Activated CD8-positive, alpha-beta memory T cell treated with anti-CD3 and anti-CD28 coated beads, Interleukin-2, amount 10 ng/mL, durations not matched to agents 7 days and 5 days (primary cell): ENCODE measurements at regions of chr3 and their contacts with region 1.

Region 1: GRCh38 chr3:156509189-156510174 is 45.4 kb downstream of the SSR3 start:
- DNase-seq: no peak
- ATAC-seq: peak; percentile 76
- H3K4me3 Mint-ChIP-seq: no peak overlapping the region
- H3K27ac Mint-ChIP-seq: no peak overlapping the region
- H3K4me1 Mint-ChIP-seq: peaks cover 13% of the 10 kb centered on the region
- H3K27me3 Mint-ChIP-seq: peaks cover 6% of the 10 kb centered on the region

Region 2: DNA sequence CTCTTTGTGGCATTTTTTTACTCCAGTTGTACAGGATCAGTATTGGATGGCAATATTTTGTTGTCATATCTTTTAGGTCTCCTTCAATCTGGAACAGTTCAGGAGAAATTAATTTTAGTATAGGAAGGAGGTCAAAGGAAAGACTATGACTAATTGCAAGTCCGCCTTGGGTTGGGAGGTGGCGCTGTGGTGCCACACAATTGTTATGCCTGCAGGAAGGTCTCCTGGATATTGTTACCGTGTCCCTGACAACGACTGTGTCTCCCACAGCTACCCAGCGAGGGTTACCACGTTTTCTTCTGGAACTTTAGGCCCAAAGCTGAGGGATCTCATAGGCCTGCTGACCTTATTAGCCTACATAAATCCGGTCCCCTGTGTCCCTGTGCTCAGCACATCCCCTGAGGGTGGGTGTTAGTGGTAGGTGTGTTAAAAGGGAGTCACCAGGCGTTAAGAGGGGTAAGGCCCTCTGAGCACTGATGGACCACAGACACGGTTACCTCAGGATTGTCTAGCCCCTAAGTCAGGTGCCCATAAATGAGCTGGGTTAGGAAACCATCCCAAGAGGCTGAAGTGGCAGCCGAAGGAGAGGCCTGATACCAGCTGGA is 357.6 kb before region 1 on chr3:
- CTCF ChIA-PET with region 1: interaction called, 75 read pairs
- DNase-seq: peak; percentile 68
- ATAC-seq: peak; percentile 65
- H3K4me3 Mint-ChIP-seq: no peak overlapping the region
- H3K27ac Mint-ChIP-seq: no peak overlapping the region
- H3K4me1 Mint-ChIP-seq: peaks cover 11% of the 10 kb centered on the region
- H3K27me3 Mint-ChIP-seq: peaks cover 7% of the 10 kb centered on the region

Region 3: GRCh38 chr3:156449712-156450574 is 59.5 kb before region 1 on chr3:
- CTCF ChIA-PET with region 1: interaction called, 35 read pairs
- DNase-seq: no peak
- ATAC-seq: peak; percentile 55
- H3K4me3 Mint-ChIP-seq: no peak overlapping the region
- H3K27ac Mint-ChIP-seq: no peak overlapping the region
- H3K4me1 Mint-ChIP-seq: no peaks in the 10 kb centered on the region
- H3K27me3 Mint-ChIP-seq: peaks cover 21% of the 10 kb centered on the region

Region 4: DNA sequence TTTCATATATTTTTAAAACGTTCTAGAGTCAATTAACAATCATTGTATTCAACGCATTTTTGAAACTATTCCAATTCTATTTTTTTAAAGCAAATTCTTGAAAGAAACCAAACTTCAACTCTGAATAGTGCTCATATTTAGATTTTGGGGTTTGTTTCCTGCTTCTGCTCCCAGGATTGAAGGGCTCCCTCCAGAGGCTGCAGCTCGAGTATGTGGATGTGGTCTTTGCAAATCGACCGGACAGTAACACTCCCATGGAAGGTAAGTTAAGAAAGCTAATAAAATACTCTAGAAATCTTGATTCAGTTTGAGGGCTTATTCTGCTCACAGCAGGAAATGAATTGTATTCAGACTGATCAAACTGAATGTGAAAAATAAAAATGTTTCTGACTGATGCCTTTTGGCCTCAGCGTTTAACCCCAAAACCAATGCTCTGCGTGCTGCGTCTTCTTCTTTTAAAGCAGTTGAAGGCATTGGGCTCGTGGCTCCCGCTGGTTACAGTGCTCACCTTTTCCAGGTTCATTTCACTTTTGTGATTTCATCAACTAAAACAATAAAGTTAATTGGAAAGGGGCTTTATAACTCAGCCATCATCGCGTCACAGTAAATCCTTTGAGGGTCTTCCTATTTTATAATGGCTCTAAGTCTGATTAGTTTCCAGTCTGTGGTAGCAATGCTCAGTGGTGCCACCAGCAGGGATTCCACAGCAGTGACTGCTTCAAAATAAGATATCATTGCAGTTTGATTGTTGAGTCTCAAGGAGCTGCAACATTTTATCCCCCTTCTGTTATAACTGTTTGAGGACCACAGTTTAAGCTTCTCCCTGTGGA is 34.7 kb before region 1 on chr3:
- CTCF ChIA-PET with region 1: interaction called, 24 read pairs
- DNase-seq: no peak
- ATAC-seq: no peak
- H3K4me3 Mint-ChIP-seq: no peak overlapping the region
- H3K27ac Mint-ChIP-seq: no peak overlapping the region
- H3K4me1 Mint-ChIP-seq: no peaks in the 10 kb centered on the region
- H3K27me3 Mint-ChIP-seq: peaks cover 35% of the 10 kb centered on the region

Region 5: GRCh38 chr3:156483961-156484787 is 25.3 kb before region 1 on chr3:
- CTCF ChIA-PET with region 1: interaction called, 40 read pairs
- DNase-seq: peak; percentile 79
- ATAC-seq: peak; percentile 83
- H3K4me3 Mint-ChIP-seq: peak overlapping the region; percentile 77
- H3K27ac Mint-ChIP-seq: peak overlapping the region; percentile 99
- H3K4me1 Mint-ChIP-seq: peaks cover 42% of the 10 kb centered on the region
- H3K27me3 Mint-ChIP-seq: no peaks in the 10 kb centered on the region

Region 6: GRCh38 chr3:156519758-156520162 is 10.3 kb after region 1 on chr3:
- CTCF ChIA-PET with region 1: interaction called, 10 read pairs
- DNase-seq: peak; percentile 45
- ATAC-seq: peak; percentile 62
- H3K4me3 Mint-ChIP-seq: no peak overlapping the region
- H3K27ac Mint-ChIP-seq: no peak overlapping the region
- H3K4me1 Mint-ChIP-seq: peaks cover 35% of the 10 kb centered on the region
- H3K27me3 Mint-ChIP-seq: peaks cover 19% of the 10 kb centered on the region